ENCODE measurements at regions of chr10 and their contacts with region 1.

Region 1: GRCh38 chr10:114550756-114551635 is 107.1 kb downstream of the ABLIM1 start:
- DNase-seq: peak; percentile 69 to 85 (median 73)
- ATAC-seq: peak; percentile 47 to 60
- H3K4me3 ChIP-seq: peak overlapping the region; percentile 29
- H3K27ac ChIP-seq: peak overlapping the region; percentile 93
- H3K4me1 ChIP-seq: peaks cover 19% of the 10 kb centered on the region
- H3K27me3 ChIP-seq: no peaks in the 10 kb centered on the region

Region 2: DNA sequence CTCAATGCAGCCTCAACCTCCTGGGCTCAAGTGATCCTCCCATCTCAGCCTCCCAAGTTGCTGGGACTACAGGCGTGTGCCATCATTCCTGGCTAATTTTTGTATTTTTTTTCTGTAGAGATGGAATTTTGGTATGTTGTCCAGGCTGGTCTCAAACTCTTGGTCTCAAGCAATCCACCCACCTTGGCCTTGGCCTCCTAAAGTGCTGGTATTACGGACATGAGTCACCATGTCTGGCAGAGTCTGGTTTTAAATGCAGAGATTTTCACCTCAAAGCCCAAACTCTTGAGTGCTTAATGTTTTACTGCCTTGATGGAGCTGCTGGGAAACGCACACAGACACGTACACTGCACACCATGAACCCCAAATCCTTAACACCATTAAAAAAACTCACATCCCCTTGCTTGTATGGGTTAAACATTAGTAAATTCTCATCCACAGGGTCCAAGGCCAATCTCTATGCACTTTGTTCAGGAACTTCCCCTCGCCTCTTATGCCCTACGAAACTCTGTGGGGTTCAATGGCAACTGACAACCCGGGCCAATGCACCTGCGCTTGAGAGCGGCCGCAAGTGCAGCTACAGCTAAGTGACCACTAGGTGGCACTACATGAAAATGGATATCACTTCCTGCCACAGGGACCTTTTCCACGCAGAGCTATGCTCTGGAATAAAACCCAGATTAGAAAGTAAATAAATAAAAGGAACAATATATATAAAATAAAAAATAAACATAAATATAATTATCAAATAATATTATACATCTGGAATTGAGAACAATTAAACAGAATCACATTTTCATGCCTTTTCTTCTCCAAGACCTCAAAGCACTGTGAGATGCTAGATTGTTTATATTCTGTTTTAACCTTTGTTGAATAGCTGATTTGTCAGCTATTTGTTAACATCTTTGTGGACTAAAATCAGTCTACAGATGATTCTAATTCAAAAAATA is 79.8 kb before region 1 on chr10:
- intact Hi-C with region 1: loop called in 1 of 4 experiments (anchors 5 kb)
- DNase-seq: peak; percentile 53 to 82 (median 78)
- ATAC-seq: peak; percentile 81 to 85
- H3K4me3 ChIP-seq: no peak overlapping the region
- H3K27ac ChIP-seq: peak overlapping the region; percentile 62
- H3K4me1 ChIP-seq: peaks cover 6% of the 10 kb centered on the region
- H3K27me3 ChIP-seq: no peaks in the 10 kb centered on the region

Region 3: GRCh38 chr10:114694752-114695151 is 143.8 kb after region 1 on chr10:
- intact Hi-C with region 1: loop called in 2 of 4 experiments (anchors 5 kb)
- DNase-seq: no peak
- ATAC-seq: no peak
- H3K4me3 ChIP-seq: no peak overlapping the region
- H3K27ac ChIP-seq: no peak overlapping the region
- H3K4me1 ChIP-seq: peaks cover 2% of the 10 kb centered on the region
- H3K27me3 ChIP-seq: no peaks in the 10 kb centered on the region

Region 4: GRCh38 chr10:114714281-114714741 is 163.3 kb after region 1 on chr10:
- intact Hi-C with region 1: loop called in 2 of 4 experiments (anchors 10 kb)
- DNase-seq: peak in 1 of 3 donors; percentile 45
- ATAC-seq: peak; percentile 66 to 79
- H3K4me3 ChIP-seq: no peak overlapping the region
- H3K27ac ChIP-seq: peak overlapping the region; percentile 60
- H3K4me1 ChIP-seq: peaks cover 11% of the 10 kb centered on the region
- H3K27me3 ChIP-seq: no peaks in the 10 kb centered on the region

Region 5: GRCh38 chr10:114970515-114970914 is 419.5 kb after region 1 on chr10:
- intact Hi-C with region 1: no loop called
- DNase-seq: no peak
- ATAC-seq: peak in 1 of 2 donors; percentile 37
- H3K4me3 ChIP-seq: no peak overlapping the region
- H3K27ac ChIP-seq: no peak overlapping the region
- H3K4me1 ChIP-seq: no peaks in the 10 kb centered on the region
- H3K27me3 ChIP-seq: no peaks in the 10 kb centered on the region